ENCODE measurements at regions of chr12 and their contacts with region 1.

Region 1: GRCh38 chr12:94545935-94546771 is 86.5 kb upstream of the CEP83 start:
- DNase-seq: peak; percentile 40
- H3K4me3 ChIP-seq: no peak overlapping the region
- H3K27ac ChIP-seq: no peak overlapping the region
- H3K4me1 ChIP-seq: no peaks in the 10 kb centered on the region
- H3K27me3 ChIP-seq: no peaks in the 10 kb centered on the region
- CTCF ChIP-seq: peak in 3 of 4 experiments; percentile 63 to 84 (median 79)
- POLR2A ChIP-seq: no peak

Region 2: GRCh38 chr12:94500831-94501567 is 45.2 kb before region 1 on chr12:
- intact Hi-C with region 1: no loop called
- DNase-seq: no peak
- H3K4me3 ChIP-seq: no peak overlapping the region
- H3K27ac ChIP-seq: no peak overlapping the region
- H3K4me1 ChIP-seq: no peaks in the 10 kb centered on the region
- H3K27me3 ChIP-seq: no peaks in the 10 kb centered on the region
- CTCF ChIP-seq: no peak
- POLR2A ChIP-seq: no peak

Region 3: GRCh38 chr12:94649349-94650142 is 103.4 kb after region 1 on chr12:
- intact Hi-C with region 1: loop called (anchors 5 kb)
- DNase-seq: peak; percentile 24
- H3K4me3 ChIP-seq: peak overlapping the region; percentile 63 to 84
- H3K27ac ChIP-seq: peak overlapping the region; percentile 63 to 83
- H3K4me1 ChIP-seq: peaks cover 3% of the 10 kb centered on the region
- H3K27me3 ChIP-seq: no peaks in the 10 kb centered on the region
- CTCF ChIP-seq: peak in 2 of 4 experiments; percentile 52 to 53
- POLR2A ChIP-seq: no peak

Region 4: DNA sequence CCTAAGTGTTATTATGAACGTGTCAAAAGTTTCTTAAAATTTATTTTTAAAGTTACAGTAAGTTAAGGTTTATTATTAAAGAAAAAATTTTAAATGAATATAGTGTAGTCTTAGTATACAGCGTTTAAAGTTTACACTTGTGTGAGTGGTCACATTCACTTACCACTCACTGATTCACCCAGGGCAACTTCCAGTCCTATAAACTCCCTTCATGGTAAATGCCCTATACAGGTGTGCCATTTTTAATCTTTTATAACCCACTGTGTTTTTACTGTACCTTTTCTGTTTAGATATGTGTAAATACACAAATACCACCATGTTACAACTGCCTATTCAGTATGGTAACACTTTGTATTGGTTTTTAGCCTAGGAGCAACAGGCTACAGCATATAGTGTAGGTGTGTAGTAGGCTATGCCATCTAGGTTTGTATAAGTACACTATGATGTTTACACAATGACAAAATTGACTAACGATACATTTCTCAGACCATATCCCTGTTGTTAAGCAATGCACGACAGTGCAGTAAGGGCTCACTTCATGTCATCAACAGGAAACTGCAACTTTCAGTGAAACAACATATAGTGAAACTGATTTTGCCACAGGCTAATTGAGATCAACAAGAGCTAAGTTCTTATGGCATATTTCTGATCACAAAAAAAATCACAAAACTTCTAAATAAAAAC is 216.2 kb after region 1 on chr12:
- intact Hi-C with region 1: loop called (anchors 5 kb)
- DNase-seq: no peak
- H3K4me3 ChIP-seq: no peak overlapping the region
- H3K27ac ChIP-seq: no peak overlapping the region
- H3K4me1 ChIP-seq: no peaks in the 10 kb centered on the region
- H3K27me3 ChIP-seq: no peaks in the 10 kb centered on the region
- CTCF ChIP-seq: no peak
- POLR2A ChIP-seq: no peak

Region 5: GRCh38 chr12:94980577-94980976 is 434.4 kb after region 1 on chr12:
- intact Hi-C with region 1: loop called (anchors 2 kb)
- DNase-seq: no peak
- H3K4me3 ChIP-seq: no peak overlapping the region
- H3K27ac ChIP-seq: no peak overlapping the region
- H3K4me1 ChIP-seq: no peaks in the 10 kb centered on the region
- H3K27me3 ChIP-seq: no peaks in the 10 kb centered on the region
- CTCF ChIP-seq: peak in 3 of 4 experiments; percentile 33 to 49 (median 36)
- POLR2A ChIP-seq: no peak

Region 6: DNA sequence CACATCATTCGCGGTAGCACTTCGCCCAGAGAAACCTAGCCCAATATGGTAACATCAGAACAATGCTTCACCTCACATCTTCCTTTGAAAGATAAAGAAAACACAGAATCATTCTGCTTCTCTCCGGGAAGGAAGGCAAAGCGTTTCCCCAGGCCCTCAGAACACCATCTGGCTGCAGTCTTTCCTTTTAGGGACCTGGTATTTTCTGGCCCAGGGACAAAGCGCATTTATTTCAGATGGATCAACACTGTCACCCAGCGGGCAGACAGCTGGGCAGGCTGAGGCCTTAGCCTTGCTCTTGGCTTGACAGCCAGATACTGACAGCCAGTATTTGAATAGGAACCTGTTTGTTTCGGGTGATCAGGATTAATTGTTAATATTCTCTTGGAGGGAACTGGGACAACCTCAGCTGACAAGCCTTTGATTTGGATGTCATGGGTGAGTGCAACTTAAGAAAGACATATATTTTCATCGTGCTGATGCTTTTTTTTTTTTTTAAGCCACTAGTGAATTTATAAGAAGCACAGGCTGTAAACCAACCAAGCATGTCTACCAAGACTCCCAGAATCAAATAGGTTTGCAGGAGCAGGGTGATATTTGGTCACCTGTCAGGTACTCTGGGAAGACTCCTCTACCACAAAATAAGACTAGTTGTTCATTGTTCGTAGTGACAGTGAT is 790.4 kb after region 1 on chr12:
- intact Hi-C with region 1: loop called (anchors 10 kb)
- DNase-seq: peak; percentile 84
- H3K4me3 ChIP-seq: no peak overlapping the region
- H3K27ac ChIP-seq: peak overlapping the region; percentile 36 to 57
- H3K4me1 ChIP-seq: no peaks in the 10 kb centered on the region
- H3K27me3 ChIP-seq: no peaks in the 10 kb centered on the region
- CTCF ChIP-seq: peak; percentile 84 to 97 (median 87)
- POLR2A ChIP-seq: no peak

Measured in prostate gland (tissue), 2 donors.